Psoas muscle (tissue), 8 donors: ENCODE measurements at regions of chr11 and their contacts with region 1.

Region 1: GRCh38 chr11:15208378-15209222 is 93.9 kb downstream of the INSC start:
- DNase-seq: peak; percentile 64 to 79
- ATAC-seq: peak; percentile 91 to 97 (median 94)
- H3K4me3 ChIP-seq: no peak overlapping the region
- H3K27ac ChIP-seq: no peak overlapping the region
- H3K4me1 ChIP-seq: no peaks in the 10 kb centered on the region
- H3K27me3 ChIP-seq: no peaks in the 10 kb centered on the region
- CTCF ChIP-seq: peak; percentile 95

Region 2: GRCh38 chr11:15035283-15035682 is 173.3 kb before region 1 on chr11:
- intact Hi-C with region 1: no loop called
- DNase-seq: no peak
- ATAC-seq: no peak
- H3K4me3 ChIP-seq: no peak overlapping the region
- H3K27ac ChIP-seq: no peak overlapping the region
- H3K4me1 ChIP-seq: no peaks in the 10 kb centered on the region
- H3K27me3 ChIP-seq: peaks cover 0 to 6% (median 3%) of the 10 kb centered on the region in 3 donors
- CTCF ChIP-seq: no peak

Region 3: GRCh38 chr11:15101072-15101709 is 107.4 kb before region 1 on chr11:
- intact Hi-C with region 1: loop called (anchors 1 to 2 kb)
- DNase-seq: peak; percentile 39 to 68
- ATAC-seq: peak; percentile 83 to 90 (median 86)
- H3K4me3 ChIP-seq: no peak overlapping the region
- H3K27ac ChIP-seq: no peak overlapping the region
- H3K4me1 ChIP-seq: no peaks in the 10 kb centered on the region
- H3K27me3 ChIP-seq: peaks cover 0 to 3% (median 0%) of the 10 kb centered on the region in 3 donors
- CTCF ChIP-seq: peak; percentile 91

Region 4: GRCh38 chr11:15248749-15249148 is 40.1 kb after region 1 on chr11:
- intact Hi-C with region 1: no loop called
- DNase-seq: no peak
- ATAC-seq: no peak
- H3K4me3 ChIP-seq: no peak overlapping the region
- H3K27ac ChIP-seq: no peak overlapping the region
- H3K4me1 ChIP-seq: no peaks in the 10 kb centered on the region
- H3K27me3 ChIP-seq: peaks cover 0 to 4% (median 0%) of the 10 kb centered on the region in 3 donors
- CTCF ChIP-seq: no peak